Activated B cell treated with CpG ODN at 0.5 μM for 24 hours (primary cell): ENCODE measurements at regions of chr9 and their contacts with region 1.

Region 1: DNA sequence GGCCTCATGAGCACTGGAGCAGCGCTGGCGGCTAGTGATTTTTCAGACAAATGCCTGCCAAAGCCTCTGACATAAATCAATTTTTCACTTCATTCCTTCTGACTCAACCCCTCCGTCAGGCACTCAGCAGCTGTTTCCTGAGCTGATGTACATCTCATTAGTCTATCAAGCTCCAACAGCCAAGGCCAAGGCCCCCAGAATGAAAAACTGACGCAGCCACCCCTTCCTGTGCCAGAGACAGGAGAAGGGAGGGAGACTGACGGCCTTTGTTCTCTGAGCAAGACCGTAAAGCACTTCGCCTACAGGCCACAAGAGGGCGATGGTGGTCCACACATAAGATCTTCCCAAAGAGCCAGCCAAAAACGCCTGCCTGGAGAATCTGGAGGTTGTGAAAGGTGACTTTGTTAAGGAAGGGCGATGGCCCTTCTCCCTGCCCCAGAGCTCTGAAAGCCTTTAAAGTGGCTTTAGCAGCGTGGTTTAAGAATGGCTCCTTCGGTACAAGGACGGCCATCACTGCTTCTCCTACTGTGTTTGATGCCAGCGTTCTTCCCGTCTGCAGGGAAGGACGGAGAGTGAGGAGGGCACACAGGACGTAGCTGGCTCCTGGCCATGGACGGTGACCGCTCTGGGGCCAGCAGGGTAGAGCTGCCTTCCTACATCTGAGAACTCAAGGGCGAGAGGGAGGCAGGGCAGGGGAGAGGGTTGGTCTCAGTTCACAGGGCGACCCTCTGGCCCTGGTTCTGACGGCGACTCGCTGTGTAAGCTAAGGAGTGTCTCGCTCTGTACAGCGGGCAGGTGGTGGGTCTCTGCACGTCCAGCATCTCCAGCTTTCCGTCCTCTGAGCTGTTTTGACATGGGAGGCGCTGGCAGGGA is 37.0 kb downstream of the ALG2 start:
- DNase-seq: peak; percentile 76
- ATAC-seq: peak; percentile 80
- H3K4me3 Mint-ChIP-seq: peak overlapping the region; percentile 57
- H3K27ac Mint-ChIP-seq: peak overlapping the region; percentile 95
- H3K4me1 Mint-ChIP-seq: peaks cover 98% of the 10 kb centered on the region
- H3K27me3 Mint-ChIP-seq: no peaks in the 10 kb centered on the region
- CTCF ChIP-seq: peak; percentile 81

Region 2: DNA sequence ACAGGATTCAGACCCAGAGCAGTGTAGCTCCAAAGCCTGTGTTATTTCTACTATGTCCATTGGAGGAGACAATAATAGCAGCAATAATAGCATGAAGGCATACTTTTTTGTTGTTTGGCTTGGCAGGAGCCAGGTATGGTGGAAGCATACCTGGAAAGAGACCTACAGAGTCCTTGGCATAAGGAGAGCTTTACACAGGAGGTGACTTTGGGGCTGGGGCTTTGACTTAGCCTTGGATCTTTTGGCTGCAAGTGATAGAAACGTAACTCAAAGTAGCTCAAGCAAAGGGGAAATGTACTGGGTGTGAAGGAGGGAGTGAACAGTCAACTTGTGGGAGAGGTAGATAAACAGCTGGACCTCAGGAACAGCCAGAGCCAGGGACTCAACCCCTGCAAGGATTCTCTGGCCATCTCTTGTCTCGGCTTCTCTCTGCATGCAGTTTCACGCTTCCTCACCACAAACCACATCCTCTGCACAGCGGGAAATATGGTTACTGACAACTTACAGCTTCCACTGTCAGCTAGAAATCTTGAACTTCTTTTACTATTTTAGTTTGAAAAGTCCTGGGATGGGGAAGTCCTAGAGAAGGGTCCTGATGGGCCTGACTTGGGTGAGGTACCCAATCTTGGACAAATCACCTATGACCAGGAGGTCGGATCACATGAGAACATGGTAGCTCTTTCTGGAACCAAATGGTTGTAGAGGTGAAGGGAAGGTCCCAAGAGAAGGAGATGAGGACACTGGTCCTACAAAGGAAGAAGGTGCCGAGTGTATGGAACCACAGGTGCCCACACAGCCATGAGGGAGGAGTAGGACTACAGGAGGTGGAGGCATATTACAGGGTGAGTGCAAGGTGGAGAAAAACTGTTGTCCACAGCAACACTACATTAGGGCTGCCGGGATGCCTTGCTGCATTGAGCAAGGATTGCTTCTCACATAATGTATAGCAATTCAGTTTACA is 126.8 kb before region 1 on chr9:
- CTCF ChIA-PET with region 1: no interaction called
- POLR2A ChIA-PET with region 1: interaction called, 5 read pairs
- intact Hi-C with region 1: loop called (anchors 5 kb)
- DNase-seq: peak; percentile 36
- ATAC-seq: peak; percentile 51
- H3K4me3 Mint-ChIP-seq: peak overlapping the region; percentile 70
- H3K27ac Mint-ChIP-seq: peak overlapping the region; percentile 94
- H3K4me1 Mint-ChIP-seq: peaks cover 73% of the 10 kb centered on the region
- H3K27me3 Mint-ChIP-seq: no peaks in the 10 kb centered on the region
- CTCF ChIP-seq: no peak

Region 3: DNA sequence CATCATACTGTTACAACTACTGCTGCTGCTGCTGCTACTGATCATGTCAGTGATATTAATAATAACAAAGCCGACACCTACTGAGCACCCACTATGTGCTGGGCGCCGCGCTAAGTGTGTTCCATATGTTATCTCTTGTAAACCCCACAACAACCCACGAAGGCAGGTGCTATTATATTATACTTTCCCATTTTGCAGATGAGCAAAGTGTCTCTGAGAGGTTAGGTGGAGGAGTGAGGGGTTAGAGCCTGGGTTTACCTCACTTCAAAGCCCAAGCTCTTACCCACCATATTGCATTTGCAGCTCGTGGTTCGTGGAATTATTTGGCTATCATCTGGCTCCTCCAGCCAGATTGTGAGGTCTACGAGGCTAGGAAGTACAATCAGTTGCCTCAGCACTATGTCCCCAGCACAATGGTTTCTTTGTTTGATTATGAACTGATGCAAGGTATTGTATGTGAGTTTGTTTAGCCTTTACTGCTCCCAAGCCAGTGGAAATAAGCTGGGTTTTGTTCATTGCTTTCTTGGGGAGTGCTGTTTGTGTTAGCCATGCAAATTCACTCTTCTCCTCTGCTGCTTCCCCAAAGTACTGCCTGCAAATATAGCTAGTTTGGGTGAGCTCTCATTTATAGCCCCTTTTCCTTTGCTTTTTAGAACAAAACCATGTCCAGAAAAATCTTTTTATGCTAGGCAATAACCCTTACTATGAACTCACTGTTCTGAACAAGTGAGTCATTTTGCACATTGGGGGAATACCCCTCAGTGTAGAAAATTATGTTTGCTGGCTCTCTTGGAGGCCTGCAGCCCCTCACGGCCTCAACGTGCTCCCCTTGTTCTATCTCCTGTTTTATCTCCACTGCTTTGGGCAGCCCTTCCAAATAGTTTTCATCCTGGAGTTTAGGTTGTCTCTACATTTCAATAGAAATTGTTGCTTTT is 10.9 kb before region 1 on chr9:
- CTCF ChIA-PET with region 1: interaction called, 120 read pairs
- POLR2A ChIA-PET with region 1: interaction called, 157 read pairs
- intact Hi-C with region 1: no loop called
- DNase-seq: no peak
- ATAC-seq: peak; percentile 60
- H3K4me3 Mint-ChIP-seq: no peak overlapping the region
- H3K27ac Mint-ChIP-seq: no peak overlapping the region
- H3K4me1 Mint-ChIP-seq: peaks cover 46% of the 10 kb centered on the region
- H3K27me3 Mint-ChIP-seq: no peaks in the 10 kb centered on the region
- CTCF ChIP-seq: no peak

Region 4: GRCh38 chr9:99253772-99254431 is 69.2 kb after region 1 on chr9:
- CTCF ChIA-PET with region 1: interaction called, 6 read pairs
- POLR2A ChIA-PET with region 1: interaction called, 42 read pairs
- intact Hi-C with region 1: loop called (anchors 1 kb)
- DNase-seq: peak; percentile 73
- ATAC-seq: peak; percentile 87
- H3K4me3 Mint-ChIP-seq: peak overlapping the region; percentile 59
- H3K27ac Mint-ChIP-seq: peak overlapping the region; percentile 94
- H3K4me1 Mint-ChIP-seq: peaks cover 49% of the 10 kb centered on the region
- H3K27me3 Mint-ChIP-seq: no peaks in the 10 kb centered on the region
- CTCF ChIP-seq: no peak

Region 5: DNA sequence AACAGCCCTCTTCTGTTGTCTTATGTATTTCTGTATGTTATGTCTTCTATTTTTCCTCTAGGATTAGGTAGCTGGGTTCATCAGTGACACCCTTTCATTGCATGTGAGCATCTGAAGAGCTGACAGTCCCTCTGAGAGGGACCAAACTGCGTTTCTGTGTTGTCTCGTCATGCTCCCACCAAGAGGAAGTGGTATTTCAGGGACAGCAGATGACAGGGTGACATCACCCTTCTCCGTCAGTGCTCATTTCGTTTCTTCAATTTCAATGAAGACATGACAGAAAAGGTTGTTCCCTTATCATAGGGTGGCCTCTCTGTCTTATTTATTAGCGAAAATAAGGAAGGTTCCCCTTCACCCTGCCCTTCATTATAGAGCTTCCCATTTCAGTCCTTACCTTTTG is 411.1 kb after region 1 on chr9:
- CTCF ChIA-PET with region 1: no interaction called
- POLR2A ChIA-PET with region 1: no interaction called
- intact Hi-C with region 1: loop called (anchors 1 kb)
- DNase-seq: no peak
- ATAC-seq: peak; percentile 78
- H3K4me3 Mint-ChIP-seq: peak overlapping the region; percentile 21
- H3K27ac Mint-ChIP-seq: peak overlapping the region; percentile 85
- H3K4me1 Mint-ChIP-seq: peaks cover 54% of the 10 kb centered on the region
- H3K27me3 Mint-ChIP-seq: no peaks in the 10 kb centered on the region
- CTCF ChIP-seq: no peak

Region 6: DNA sequence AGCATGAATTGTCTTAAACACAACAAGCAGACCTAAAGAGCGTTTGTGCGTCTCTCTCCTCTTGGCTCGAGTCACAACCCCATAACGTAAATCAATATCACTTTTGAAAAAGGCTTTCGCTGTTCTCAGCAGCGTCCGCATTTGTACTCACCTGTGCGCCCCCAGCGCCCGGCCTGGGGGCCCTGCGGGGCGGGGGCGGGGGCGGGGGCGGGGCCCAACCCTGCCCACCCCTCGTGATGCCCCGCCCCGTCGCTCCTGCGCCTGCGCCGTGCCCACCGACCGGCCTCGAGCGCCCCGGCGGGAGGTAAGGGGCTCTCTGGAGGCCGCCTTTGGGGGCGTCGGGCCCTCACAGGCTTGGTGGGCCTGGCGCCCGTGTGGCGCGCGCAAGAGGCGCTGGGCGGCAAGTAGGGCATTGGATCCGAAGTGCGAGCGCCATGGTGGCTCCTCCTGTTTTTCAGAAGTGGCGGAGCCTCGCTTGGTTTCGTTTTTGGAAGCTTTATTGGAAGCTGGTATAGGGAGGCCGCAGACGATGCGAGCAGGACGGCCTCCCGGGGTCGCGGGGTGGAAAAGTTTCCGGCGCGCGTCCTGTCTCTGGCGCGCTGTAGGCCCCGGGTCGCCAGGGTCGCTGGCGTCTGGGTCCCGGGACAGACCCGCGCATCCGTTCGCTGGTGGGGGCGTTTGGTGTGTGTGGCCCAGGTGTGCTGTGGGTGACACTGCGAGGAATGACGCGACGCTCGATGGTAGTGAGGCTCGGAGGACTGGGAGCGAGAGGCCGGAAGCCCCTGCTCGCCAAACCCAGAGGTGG is 721.9 kb after region 1 on chr9 and contains the start of gene STX17:
- CTCF ChIA-PET with region 1: interaction called, 5 read pairs
- POLR2A ChIA-PET with region 1: no interaction called
- intact Hi-C with region 1: loop called (anchors 1 kb)
- DNase-seq: peak; percentile 90
- ATAC-seq: peak; percentile 87
- H3K4me3 Mint-ChIP-seq: peak within 1 kb of the TSS; percentile 98
- H3K27ac Mint-ChIP-seq: peak within 1 kb of the TSS; percentile 95
- H3K4me1 Mint-ChIP-seq: peaks cover 17% of the 10 kb centered on the region
- H3K27me3 Mint-ChIP-seq: no peaks in the 10 kb centered on the region
- CTCF ChIP-seq: no peak
- total RNA-seq, gene STX17: 32.2 and 39.2 TPM in 2 replicates

Region 7: GRCh38 chr9:100098887-100099721 is 914.4 kb after region 1 on chr9 and contains the starts of genes ERP44 and INVS:
- CTCF ChIA-PET with region 1: no interaction called
- POLR2A ChIA-PET with region 1: no interaction called
- intact Hi-C with region 1: loop called (anchors 1 kb)
- DNase-seq: peak; percentile 86
- ATAC-seq: peak; percentile 99
- H3K4me3 Mint-ChIP-seq: peak within 1 kb of the TSS; percentile 100
- H3K27ac Mint-ChIP-seq: peak within 1 kb of the TSS; percentile 97
- H3K4me1 Mint-ChIP-seq: peaks cover 42% of the 10 kb centered on the region
- H3K27me3 Mint-ChIP-seq: no peaks in the 10 kb centered on the region
- CTCF ChIP-seq: no peak
- total RNA-seq, gene ERP44: 14.8 and 16.5 TPM in 2 replicates
- total RNA-seq, gene INVS: 26.7 and 34.0 TPM in 2 replicates